ENCODE measurements at regions of chr10 and their contacts with region 1.

Region 1: DNA sequence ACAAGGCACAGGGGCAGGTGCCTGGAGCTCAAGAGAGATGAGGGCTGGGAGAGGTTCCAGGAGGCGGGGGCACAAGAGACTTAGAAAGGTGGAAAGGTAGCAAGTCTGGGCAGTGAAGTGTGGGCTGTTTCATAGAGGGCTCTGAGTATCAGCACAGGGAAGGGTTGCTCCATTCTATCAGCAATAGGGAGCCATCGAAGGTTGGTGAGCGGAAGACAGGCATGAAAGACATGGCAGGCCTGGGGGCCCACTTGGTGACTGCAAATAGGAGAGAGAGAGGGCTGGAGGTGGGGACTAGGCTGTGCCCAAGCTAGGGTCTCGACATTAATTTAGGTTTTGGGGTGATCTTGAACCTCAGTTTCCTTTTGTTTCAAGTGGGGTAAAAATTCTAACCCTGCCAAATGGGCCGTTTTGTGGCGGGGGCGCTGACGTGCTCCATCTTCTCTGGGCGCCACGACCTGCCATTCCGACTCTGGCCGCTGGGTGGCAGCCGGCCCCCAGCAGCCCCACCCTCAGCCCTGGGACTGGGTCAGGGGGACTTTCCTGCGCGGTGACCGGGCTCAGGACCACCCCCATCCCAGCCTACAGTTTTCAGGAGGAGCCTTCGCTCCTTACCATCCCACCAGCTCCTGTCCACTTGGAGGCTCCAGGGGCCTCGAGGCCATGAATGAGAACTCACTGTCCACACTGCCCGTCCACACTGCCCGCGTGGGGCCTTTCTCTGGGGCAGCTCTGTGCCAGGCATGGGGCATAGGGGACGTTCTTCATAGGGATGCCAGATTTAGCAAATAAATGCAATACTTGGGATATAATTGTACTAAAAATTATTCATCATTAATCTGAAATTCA is 37.2 kb upstream of the PCBD1 start:
- DNase-seq: no peak
- ATAC-seq: peak; percentile 98
- H3K4me3 ChIP-seq: no peak overlapping the region
- H3K27ac ChIP-seq: no peak overlapping the region
- H3K4me1 ChIP-seq: no peaks in the 10 kb centered on the region
- H3K27me3 ChIP-seq: peaks cover 52% of the 10 kb centered on the region
- CTCF ChIP-seq: peak; percentile 77
- POLR2A ChIP-seq: no peak
- RAD21 ChIP-seq: peak; percentile 79

Region 2: DNA sequence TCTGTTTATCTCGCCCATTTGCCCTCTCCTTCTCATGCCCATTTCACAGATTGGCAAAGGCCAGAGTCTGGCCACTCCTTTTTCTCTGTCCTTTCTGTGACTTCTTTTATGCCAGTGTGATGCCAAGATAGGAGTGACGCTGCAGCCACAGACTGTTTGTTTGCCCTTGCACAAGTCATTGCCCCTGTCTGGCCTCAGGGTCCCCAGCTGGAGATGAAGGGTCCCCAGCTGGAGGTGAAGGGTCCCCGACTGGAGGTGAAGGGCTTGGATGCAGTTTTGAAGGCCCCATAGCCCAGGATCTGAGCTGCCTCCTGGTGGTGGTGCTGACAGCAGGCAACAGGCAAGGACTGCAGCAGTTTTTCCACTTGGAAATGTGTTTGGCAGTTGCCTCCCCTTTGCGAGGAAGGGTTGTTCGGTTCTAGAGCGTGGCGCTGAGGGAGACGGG is 342.7 kb after region 1 on chr10:
- CTCF ChIA-PET with region 1: interaction called, 3 read pairs
- POLR2A ChIA-PET with region 1: no interaction called
- dilution Hi-C with region 1: no loop called
- in situ Hi-C with region 1: no loop called
- intact Hi-C with region 1: loop called (anchors 5 kb)
- DNase-seq: peak; percentile 63
- ATAC-seq: peak; percentile 19; the same call in 1 of the 2 replicates
- H3K4me3 ChIP-seq: no peak overlapping the region
- H3K27ac ChIP-seq: peak overlapping the region; percentile 1; the same call in 1 of the 2 replicates
- H3K4me1 ChIP-seq: peaks cover 34% of the 10 kb centered on the region
- H3K27me3 ChIP-seq: no peaks in the 10 kb centered on the region
- CTCF ChIP-seq: peak; percentile 62
- POLR2A ChIP-seq: no peak
- RAD21 ChIP-seq: peak; percentile 61

Region 3: GRCh38 chr10:71285180-71285545 is 359.6 kb after region 1 on chr10:
- CTCF ChIA-PET with region 1: interaction called, 7 read pairs
- POLR2A ChIA-PET with region 1: no interaction called
- dilution Hi-C with region 1: no loop called
- in situ Hi-C with region 1: loop called (anchors 5 kb)
- intact Hi-C with region 1: loop called (anchors 1 kb)
- DNase-seq: peak; percentile 29
- ATAC-seq: peak; percentile 92
- H3K4me3 ChIP-seq: no peak overlapping the region
- H3K27ac ChIP-seq: no peak overlapping the region
- H3K4me1 ChIP-seq: peaks cover 4% of the 10 kb centered on the region; the same call in 1 of the 2 replicates
- H3K27me3 ChIP-seq: no peaks in the 10 kb centered on the region
- CTCF ChIP-seq: peak; percentile 73
- POLR2A ChIP-seq: no peak
- RAD21 ChIP-seq: peak; percentile 88